ENCODE measurements at regions of chr19 and their contacts with region 1.

Region 1: GRCh38 chr19:2610637-2611482 is 91.6 kb downstream of the GNG7 start:
- DNase-seq: peak; percentile 88
- ATAC-seq: peak; percentile 92
- H3K4me3 ChIP-seq: peak overlapping the region; percentile 65
- H3K27ac ChIP-seq: no peak overlapping the region
- H3K4me1 ChIP-seq: no peaks in the 10 kb centered on the region
- H3K27me3 ChIP-seq: no peaks in the 10 kb centered on the region
- CTCF ChIP-seq: peak; percentile 84

Region 2: GRCh38 chr19:2453386-2454025 is 157.4 kb before region 1 on chr19:
- CTCF ChIA-PET with region 1: no interaction called
- POLR2A ChIA-PET with region 1: interaction called, 11 read pairs
- intact Hi-C with region 1: no loop called
- DNase-seq: no peak
- ATAC-seq: no peak
- H3K4me3 ChIP-seq: no peak overlapping the region
- H3K27ac ChIP-seq: no peak overlapping the region
- H3K4me1 ChIP-seq: peaks cover 11% of the 10 kb centered on the region; the same call in 1 of the 2 replicates
- H3K27me3 ChIP-seq: no peaks in the 10 kb centered on the region
- CTCF ChIP-seq: no peak

Region 3: DNA sequence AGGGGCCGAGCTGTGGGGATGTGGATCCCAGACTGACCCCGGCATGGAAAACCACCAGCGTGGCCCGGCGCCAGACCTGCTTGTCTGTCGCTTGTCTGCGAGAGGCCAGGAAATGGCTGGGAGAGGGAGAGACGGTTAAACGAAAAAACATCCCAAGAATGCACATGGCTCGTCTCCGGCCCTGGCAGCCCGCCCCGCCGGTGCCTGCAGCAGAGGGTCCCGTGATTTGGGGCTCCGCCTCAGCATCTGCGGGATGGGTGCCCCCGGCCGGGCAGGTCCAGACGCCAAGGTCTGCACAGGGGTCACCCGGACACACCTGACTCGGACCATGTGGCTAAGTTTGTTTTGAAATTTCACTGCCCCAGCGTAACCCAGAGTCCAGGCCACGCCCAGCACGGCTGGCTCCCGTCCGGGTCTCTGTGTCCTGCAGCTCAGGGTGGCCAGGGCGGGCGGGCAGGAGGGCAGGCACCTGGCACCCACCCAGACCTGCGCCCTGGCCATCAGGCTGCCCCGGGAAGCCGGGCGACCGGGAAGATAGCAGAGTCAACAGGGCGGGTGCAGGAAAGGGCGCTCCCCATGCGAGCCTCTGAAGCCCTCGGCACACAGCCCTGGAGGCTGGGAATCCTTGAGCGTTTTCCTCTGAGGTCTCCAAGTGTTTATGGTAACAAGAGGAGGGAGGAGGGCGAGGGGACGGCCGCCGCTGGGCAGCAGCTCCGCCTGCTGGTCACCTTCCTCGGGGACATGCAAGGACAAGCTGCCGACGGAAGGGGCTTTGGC is 31.8 kb before region 1 on chr19:
- CTCF ChIA-PET with region 1: interaction called, 12 read pairs
- POLR2A ChIA-PET with region 1: interaction called, 5 read pairs
- intact Hi-C with region 1: no loop called
- DNase-seq: peak; percentile 87
- ATAC-seq: peak; percentile 86
- H3K4me3 ChIP-seq: peak overlapping the region; percentile 70
- H3K27ac ChIP-seq: peak overlapping the region; percentile 57
- H3K4me1 ChIP-seq: peaks cover 22% of the 10 kb centered on the region
- H3K27me3 ChIP-seq: no peaks in the 10 kb centered on the region
- CTCF ChIP-seq: peak; percentile 84

Region 4: DNA sequence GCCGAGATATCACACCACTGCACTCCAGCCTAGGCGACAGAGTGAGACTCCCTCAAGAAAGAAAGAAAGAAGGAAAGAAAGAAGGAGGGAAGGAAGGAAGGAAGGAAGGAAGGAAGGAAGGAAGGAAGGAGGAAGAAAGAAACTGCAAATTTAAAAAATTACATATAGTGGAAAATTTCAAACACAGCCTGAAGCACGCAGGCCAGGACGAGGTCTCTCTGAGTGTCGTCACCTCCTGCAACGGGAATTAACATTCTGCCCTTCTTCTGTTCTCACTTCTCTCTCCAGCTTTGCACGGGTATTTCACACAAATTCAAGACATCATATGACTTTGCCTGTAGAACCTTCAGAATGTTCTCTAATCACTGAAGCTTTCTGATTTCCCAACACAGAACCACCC is 16.5 kb before region 1 on chr19:
- CTCF ChIA-PET with region 1: no interaction called
- POLR2A ChIA-PET with region 1: interaction called, 18 read pairs
- intact Hi-C with region 1: no loop called
- DNase-seq: no peak
- ATAC-seq: no peak
- H3K4me3 ChIP-seq: no peak overlapping the region
- H3K27ac ChIP-seq: no peak overlapping the region
- H3K4me1 ChIP-seq: peaks cover 3% of the 10 kb centered on the region; the same call in 1 of the 2 replicates
- H3K27me3 ChIP-seq: no peaks in the 10 kb centered on the region
- CTCF ChIP-seq: no peak